ENCODE measurements at regions of chr11 and their contacts with region 1.

Region 1: GRCh38 chr11:44309483-44310205 is at the start of gene ALX4:
- DNase-seq: peak; percentile 50
- ATAC-seq: peak; percentile 65 to 68
- total RNA-seq, gene ALX4: 0.03 TPM in 1 of 2 donors, not detected in the other

Region 2: DNA sequence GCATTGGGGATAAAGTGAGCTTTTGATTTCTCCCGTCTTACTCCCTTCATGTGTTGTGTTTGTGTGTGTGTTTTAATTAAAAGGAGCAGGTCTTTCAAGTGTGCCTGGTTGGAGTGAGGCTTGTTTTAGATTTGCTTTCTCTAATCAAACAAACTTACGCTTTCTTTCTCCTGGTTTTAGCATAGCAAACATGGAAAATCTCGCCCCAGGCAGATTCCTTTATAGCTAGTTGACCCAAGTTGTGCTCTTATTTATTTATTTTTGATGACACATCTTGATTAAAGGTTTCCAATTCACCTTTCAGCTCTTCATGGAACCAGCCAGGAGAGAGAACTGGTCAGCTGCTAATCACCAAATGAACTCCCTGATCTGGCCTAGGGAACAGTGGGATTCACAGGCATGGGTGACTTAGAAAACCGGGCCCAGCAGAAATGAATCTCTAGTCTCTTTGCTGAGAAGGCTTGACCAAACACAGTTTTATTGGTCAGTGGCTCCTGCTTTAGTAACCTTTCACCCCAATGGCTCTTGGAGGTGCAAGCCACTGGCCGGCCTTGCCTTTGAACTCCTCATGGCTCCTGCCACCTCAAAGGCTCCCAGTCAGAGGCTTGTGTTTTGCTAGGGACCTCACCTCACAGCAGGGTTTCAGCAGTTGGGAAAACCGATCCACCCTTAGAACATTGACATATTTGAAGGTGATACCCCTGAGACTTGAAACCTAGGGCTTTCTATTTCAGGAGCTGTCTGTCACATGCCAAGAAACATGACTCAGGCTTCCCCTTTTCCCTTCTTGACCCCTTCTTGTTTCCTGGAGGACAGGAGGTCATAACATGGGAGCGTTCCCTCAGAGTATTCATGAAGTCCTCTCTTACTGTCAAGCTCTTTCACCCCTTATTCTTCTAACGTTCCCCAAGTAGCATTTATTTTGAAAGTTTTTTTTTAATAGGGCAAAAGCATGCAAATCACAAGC is 165.4 kb before region 1 on chr11:
- intact Hi-C with region 1: loop called in 1 of 2 experiments (anchors 10 kb)
- DNase-seq: no peak
- ATAC-seq: peak in 1 of 2 donors; percentile 34